PC-9 (cell line): ENCODE measurements at regions of chr17 and their contacts with region 1.

Region 1: GRCh38 chr17:62791751-62792445 is 16.2 kb downstream of the MARCHF10 start:
- DNase-seq: peak; percentile 67 to 98
- H3K4me3 ChIP-seq: peak overlapping the region; percentile 21; the same call in 1 of the 2 replicates
- H3K27ac ChIP-seq: peak overlapping the region; percentile 94
- H3K4me1 ChIP-seq: peaks cover 47% of the 10 kb centered on the region
- H3K27me3 ChIP-seq: no peaks in the 10 kb centered on the region
- CTCF ChIP-seq: no peak

Region 2: DNA sequence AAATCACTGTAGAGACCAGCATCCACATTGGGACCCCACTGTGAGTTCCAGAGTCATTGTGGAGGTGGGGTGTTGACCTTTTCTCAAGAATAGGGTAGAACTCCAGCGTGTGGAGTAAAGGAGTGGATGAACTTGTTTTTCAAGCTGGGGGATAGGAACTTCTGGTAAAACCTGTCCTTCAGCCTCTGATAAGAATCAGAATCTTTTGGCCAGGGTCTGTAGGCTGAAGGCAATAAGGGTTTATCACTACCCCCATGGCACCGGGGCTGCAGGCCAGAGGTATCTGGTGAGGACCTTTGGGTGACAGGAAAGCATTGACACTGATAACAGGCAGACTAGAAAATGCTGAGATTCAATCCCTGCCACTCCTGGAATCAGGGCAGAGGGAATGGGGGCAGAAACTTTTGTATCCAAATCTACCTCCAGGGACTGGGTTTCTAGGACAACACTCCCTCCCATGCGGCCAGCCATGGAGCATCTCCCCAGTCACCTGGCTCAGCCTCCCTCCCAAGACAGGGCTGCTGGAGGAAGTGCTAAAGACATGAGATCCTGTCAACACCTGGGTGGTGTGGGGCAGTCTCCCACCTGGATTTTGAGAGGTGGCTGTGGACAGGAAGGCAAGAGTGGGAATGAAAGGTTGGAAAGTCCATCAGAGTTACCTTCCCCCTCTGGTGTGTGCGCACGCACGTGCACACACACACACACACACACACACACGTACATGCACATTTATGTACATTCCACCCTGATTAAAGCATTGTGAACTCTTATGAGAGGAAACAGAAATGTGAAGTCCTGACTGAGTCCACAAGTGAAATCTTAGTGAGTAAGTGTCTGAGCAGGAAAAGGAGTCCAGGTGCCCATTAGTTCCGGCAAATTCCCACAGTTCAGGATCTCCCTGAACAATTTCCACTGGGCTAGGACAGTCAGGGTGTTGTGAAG is 69.3 kb after region 1 on chr17:
- CTCF ChIA-PET with region 1: no interaction called
- POLR2A ChIA-PET with region 1: no interaction called
- intact Hi-C with region 1: loop called (anchors 1 kb)
- DNase-seq: peak; percentile 79 to 94
- H3K4me3 ChIP-seq: peak overlapping the region; percentile 32; the same call in 1 of the 2 replicates
- H3K27ac ChIP-seq: peak overlapping the region; percentile 80
- H3K4me1 ChIP-seq: peaks cover 54% of the 10 kb centered on the region
- H3K27me3 ChIP-seq: no peaks in the 10 kb centered on the region
- CTCF ChIP-seq: no peak